Aorta (tissue), 5 donors: ENCODE measurements at regions of chrX and their contacts with region 1.

Region 1: GRCh38 chrX:12814420-12814819 is 23.2 kb downstream of the PRPS2 start:
- DNase-seq: no peak
- ATAC-seq: no peak
- H3K4me3 ChIP-seq: no peak overlapping the region
- H3K27ac ChIP-seq: no peak overlapping the region
- H3K4me1 ChIP-seq: no peaks in the 10 kb centered on the region
- H3K27me3 ChIP-seq: no peaks in the 10 kb centered on the region

Region 2: DNA sequence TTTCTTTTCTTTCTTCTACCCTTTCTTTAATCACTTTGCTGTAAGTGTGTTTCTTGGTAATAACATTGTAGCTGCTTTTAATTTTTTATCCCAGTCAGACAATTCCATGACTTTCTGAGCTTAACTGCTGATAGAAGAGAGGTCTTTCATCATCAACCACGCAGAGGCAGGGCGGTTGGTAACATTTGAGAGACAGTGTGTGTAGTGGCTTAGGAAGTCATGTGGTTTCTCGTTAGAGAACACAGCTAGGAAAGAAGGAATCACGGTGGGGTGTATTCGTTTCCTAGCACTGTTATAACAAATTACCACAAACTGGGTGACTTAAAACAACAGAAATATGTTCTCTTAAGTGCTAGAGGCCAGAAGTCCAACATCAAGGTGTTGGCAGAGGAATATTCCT is 11.7 kb before region 1 on chrX:
- intact Hi-C with region 1: no loop called
- DNase-seq: no peak
- ATAC-seq: no peak
- H3K4me3 ChIP-seq: no peak overlapping the region
- H3K27ac ChIP-seq: no peak overlapping the region
- H3K4me1 ChIP-seq: no peaks in the 10 kb centered on the region
- H3K27me3 ChIP-seq: no peaks in the 10 kb centered on the region

Region 3: DNA sequence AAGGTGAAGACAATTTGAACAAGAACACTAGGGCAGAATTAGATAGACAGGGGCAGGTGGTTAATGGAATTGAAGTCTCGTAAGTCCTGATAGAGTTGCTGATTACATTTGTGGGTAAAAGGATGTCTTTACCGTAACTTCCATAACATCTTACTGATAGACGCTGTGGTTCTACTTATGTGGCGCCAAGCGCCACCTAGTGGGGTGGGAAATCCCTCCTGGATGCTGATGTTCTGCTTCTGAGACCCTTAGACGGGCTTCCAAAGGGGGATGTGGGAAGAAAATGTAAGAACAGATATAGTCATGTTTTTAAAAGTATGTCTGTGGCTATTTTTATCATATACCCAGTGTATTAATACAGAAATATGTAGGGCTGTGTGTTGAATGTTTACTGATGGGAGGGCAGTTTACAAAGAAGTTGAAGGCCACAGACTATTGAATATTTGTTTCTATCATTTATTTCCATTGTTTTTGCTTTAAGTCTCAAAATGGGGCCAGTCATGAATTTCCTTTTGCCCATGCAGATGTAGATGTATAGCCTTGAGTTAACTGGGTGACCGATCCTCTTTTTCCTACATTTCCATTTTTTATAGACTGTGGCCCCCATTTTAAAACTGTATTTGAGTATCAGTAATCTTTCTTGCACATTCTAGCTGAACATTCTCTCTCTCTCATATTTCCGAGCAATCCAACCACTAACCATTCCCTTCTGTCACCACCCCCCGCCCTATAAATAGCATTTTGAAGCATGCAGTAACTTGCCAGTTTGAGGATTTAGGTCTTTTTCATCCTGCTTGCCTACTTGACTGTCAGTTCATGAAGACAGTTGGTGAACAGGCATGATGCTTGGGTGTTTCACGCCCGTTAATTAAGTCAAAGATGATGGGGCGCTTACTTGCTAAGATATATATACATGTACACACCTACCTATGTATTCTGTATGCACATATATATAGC is 79.9 kb after region 1 on chrX:
- intact Hi-C with region 1: loop called in 1 of 2 experiments (anchors 5 kb)
- DNase-seq: peak in 1 of 2 donors; percentile 50
- ATAC-seq: no peak
- H3K4me3 ChIP-seq: no peak overlapping the region
- H3K27ac ChIP-seq: no peak overlapping the region
- H3K4me1 ChIP-seq: no peaks in the 10 kb centered on the region
- H3K27me3 ChIP-seq: no peaks in the 10 kb centered on the region

Region 4: DNA sequence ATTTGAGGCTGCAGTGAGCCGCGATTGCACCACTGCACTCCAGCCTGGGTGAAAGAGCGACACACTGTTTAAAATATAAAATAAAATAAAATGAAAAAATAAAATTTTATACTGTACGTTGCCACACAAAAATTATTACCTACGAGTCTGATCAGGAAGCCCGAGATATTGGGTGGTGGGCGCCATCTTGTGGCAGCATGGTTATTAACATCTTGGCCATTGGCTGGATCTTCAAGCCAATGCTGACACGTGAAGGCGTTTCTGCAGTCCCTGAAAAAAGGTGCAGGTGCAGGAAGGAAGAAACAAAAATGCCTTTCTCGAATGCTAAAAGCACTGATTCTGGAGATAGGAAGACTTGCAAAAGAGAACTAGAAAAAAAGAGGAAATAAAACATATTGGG is 87.1 kb after region 1 on chrX:
- intact Hi-C with region 1: loop called (anchors 5 kb)
- DNase-seq: peak; percentile 62 to 84
- ATAC-seq: no peak
- H3K4me3 ChIP-seq: no peak overlapping the region
- H3K27ac ChIP-seq: no peak overlapping the region
- H3K4me1 ChIP-seq: no peaks in the 10 kb centered on the region
- H3K27me3 ChIP-seq: no peaks in the 10 kb centered on the region

Region 5: GRCh38 chrX:13376857-13377549 is 562.6 kb after region 1 on chrX:
- intact Hi-C with region 1: no loop called
- DNase-seq: peak in 1 of 2 donors; percentile 49
- ATAC-seq: no peak
- H3K4me3 ChIP-seq: no peak overlapping the region
- H3K27ac ChIP-seq: no peak overlapping the region
- H3K4me1 ChIP-seq: peaks cover 2 to 4% of the 10 kb centered on the region in 2 donors
- H3K27me3 ChIP-seq: no peaks in the 10 kb centered on the region